ENCODE measurements at regions of chr13 and their contacts with region 1.

Region 1: DNA sequence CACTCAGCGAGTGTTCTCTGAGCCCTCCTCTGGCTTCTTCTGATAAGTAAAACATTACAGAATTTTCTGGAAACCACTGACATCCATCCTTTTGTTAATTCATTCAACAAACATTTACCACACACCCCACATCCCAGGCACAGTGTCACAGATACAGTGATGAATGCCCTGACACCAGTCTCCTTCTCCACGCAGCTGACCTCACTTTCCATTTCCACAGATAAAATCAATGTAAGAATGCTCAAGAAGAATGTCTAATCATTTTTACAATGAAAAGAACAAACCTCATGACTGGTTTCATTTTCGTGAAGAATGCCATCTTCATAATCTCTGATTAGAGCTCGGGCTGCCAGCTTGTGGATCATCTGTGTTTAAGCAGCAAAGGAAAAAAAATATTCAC is 69.2 kb downstream of the PARP4 start:
- DNase-seq: no peak
- ATAC-seq: no peak
- H3K4me3 ChIP-seq: no peak overlapping the region
- H3K4me3 Mint-ChIP-seq: no peak overlapping the region
- H3K27ac ChIP-seq: no peak overlapping the region
- H3K27ac Mint-ChIP-seq: peak overlapping the region; percentile 8
- H3K4me1 ChIP-seq: no peaks in the 10 kb centered on the region
- H3K4me1 Mint-ChIP-seq: no peaks in the 10 kb centered on the region
- H3K27me3 ChIP-seq: no peaks in the 10 kb centered on the region
- H3K27me3 Mint-ChIP-seq: no peaks in the 10 kb centered on the region
- CTCF ChIP-seq: no peak

Region 2: DNA sequence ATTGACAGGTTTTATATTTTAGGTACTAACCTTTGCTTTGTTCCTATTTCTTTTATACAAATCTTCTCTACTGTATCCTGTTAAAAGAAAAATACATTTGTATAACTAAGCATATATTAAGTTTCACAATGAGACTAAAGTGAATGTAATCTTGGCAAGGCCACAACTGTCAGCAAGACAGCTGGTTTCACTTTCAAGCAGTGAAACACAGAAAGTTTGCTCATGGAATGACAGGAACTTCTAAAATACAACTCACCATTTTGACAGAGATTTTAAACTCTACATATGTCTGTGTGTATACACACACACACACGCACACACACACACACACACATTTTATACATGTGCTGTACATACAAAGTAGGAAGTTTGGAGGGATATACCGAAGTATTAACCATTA is 15.9 kb after region 1 on chr13:
- CTCF ChIA-PET with region 1: no interaction called
- POLR2A ChIA-PET with region 1: no interaction called
- intact Hi-C with region 1: no loop called
- DNase-seq: no peak
- ATAC-seq: no peak
- H3K4me3 ChIP-seq: no peak overlapping the region
- H3K4me3 Mint-ChIP-seq: no peak overlapping the region
- H3K27ac ChIP-seq: no peak overlapping the region
- H3K27ac Mint-ChIP-seq: no peak overlapping the region
- H3K4me1 ChIP-seq: no peaks in the 10 kb centered on the region
- H3K4me1 Mint-ChIP-seq: peaks cover 18% of the 10 kb centered on the region
- H3K27me3 ChIP-seq: no peaks in the 10 kb centered on the region
- H3K27me3 Mint-ChIP-seq: no peaks in the 10 kb centered on the region
- CTCF ChIP-seq: no peak

Region 3: DNA sequence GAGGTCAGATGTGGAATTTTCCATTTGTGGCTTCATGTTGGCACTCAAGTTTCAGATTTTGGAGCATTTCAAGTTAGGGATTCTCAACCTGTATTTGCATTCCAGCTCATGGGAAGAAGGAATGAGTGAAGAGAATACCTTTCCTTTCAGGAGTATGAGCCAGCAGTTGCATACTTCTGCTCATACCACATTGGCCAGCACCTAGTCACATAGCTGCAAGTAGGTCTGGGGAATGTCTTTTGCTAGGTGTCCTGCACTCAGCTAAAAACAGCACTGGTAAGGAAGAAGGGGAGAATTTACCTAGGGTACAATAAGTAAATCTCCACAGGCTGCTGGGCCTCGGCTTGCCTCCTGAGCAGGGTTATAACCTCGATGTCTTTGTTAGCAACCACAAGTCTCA is 903.8 kb after region 1 on chr13:
- CTCF ChIA-PET with region 1: no interaction called
- POLR2A ChIA-PET with region 1: no interaction called
- intact Hi-C with region 1: loop called in 1 of 2 experiments (anchors 10 kb)
- DNase-seq: no peak
- ATAC-seq: no peak
- H3K4me3 ChIP-seq: no peak overlapping the region
- H3K4me3 Mint-ChIP-seq: no peak overlapping the region
- H3K27ac ChIP-seq: no peak overlapping the region
- H3K27ac Mint-ChIP-seq: no peak overlapping the region
- H3K4me1 ChIP-seq: no peaks in the 10 kb centered on the region
- H3K4me1 Mint-ChIP-seq: no peaks in the 10 kb centered on the region
- H3K27me3 ChIP-seq: no peaks in the 10 kb centered on the region
- H3K27me3 Mint-ChIP-seq: no peaks in the 10 kb centered on the region
- CTCF ChIP-seq: no peak

Measured in CD8-positive, alpha-beta T cell (primary cell).